ENCODE measurements at regions of chr12 and their contacts with region 1.

Region 1: GRCh38 chr12:12899530-12900380 is 8.4 kb downstream of the GPRC5A start:
- DNase-seq: peak; percentile 91
- H3K4me3 Mint-ChIP-seq: no peak overlapping the region
- H3K27ac Mint-ChIP-seq: peak overlapping the region; percentile 90
- H3K4me1 Mint-ChIP-seq: peaks cover 31% of the 10 kb centered on the region
- H3K27me3 Mint-ChIP-seq: peaks cover 4% of the 10 kb centered on the region

Region 2: GRCh38 chr12:12724661-12725545 is 174.9 kb before region 1 on chr12:
- CTCF ChIA-PET with region 1: no interaction called
- intact Hi-C with region 1: loop called (anchors 1 kb)
- DNase-seq: peak; percentile 94
- H3K4me3 Mint-ChIP-seq: peak overlapping the region; percentile 85
- H3K27ac Mint-ChIP-seq: peak overlapping the region; percentile 98
- H3K4me1 Mint-ChIP-seq: peaks cover 51% of the 10 kb centered on the region
- H3K27me3 Mint-ChIP-seq: no peaks in the 10 kb centered on the region

Region 3: GRCh38 chr12:12813120-12814101 is 86.3 kb before region 1 on chr12 and contains the start of gene DDX47:
- CTCF ChIA-PET with region 1: no interaction called
- intact Hi-C with region 1: loop called (anchors 1 kb)
- DNase-seq: peak; percentile 99
- H3K4me3 Mint-ChIP-seq: peak within 1 kb of the TSS; percentile 99
- H3K27ac Mint-ChIP-seq: peak within 1 kb of the TSS; percentile 93
- H3K4me1 Mint-ChIP-seq: peaks cover 57% of the 10 kb centered on the region
- H3K27me3 Mint-ChIP-seq: no peaks in the 10 kb centered on the region
- total RNA-seq, gene DDX47: 86.6 to 87.3 TPM

Region 4: DNA sequence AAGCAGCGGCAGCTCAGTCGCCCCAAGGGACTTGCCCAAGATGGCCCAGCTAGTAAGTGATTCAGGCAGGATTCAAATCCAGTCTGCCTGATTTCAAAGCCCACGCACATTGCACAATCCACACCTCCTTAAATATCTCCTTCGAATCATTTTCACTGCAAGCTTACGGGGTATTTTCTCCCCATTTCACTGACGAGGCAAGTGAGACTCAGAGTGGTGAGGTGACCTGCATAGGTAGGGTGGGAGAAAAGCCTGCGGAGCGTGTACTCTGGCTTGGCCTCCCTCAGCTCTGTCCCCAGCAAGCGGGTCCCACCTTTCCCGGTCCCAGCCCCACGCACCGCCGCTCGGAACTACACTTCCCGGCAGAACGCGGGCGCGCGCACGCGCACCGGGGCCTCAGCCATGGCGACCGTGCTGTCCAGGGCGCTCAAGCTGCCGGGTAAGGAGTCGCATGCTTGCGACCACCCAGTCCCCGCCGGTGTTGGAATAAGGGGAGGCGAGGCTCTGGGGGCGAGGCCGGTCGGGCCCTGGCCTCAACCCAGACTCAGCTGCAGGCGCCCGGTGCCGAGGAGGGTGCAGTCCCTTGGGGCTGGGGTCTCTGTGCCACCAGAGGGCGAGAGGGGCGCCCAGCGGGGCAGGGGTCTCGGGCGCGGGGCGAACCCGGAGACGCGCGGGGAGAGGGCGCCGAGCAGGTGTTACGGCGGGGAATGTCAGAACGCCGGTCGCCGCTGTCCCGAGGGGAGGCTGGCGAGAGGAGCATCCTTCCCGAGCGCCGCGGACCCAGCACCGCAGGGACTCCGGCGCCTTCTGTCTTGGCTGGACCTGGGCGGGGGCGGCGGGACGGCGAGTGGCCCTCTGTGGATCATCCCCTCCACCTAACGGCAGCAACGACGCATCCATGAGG is 144.5 kb after region 1 on chr12 and contains the start of gene FAM234B:
- CTCF ChIA-PET with region 1: no interaction called
- intact Hi-C with region 1: loop called (anchors 1 kb)
- DNase-seq: peak; percentile 73
- H3K4me3 Mint-ChIP-seq: peak within 1 kb of the TSS; percentile 79
- H3K27ac Mint-ChIP-seq: no peak within 1 kb of the TSS
- H3K4me1 Mint-ChIP-seq: peaks cover 16% of the 10 kb centered on the region
- H3K27me3 Mint-ChIP-seq: no peaks in the 10 kb centered on the region
- total RNA-seq, gene FAM234B: 7.4 to 7.7 TPM